Heart left ventricle (tissue), 16 donors: ENCODE measurements at regions of chr5 and their contacts with region 1.

Region 1: GRCh38 chr5:150486402-150487198 is 21.3 kb upstream of the NDST1 start:
- DNase-seq: peak; percentile 71 to 77 (median 75)
- ATAC-seq: peak; percentile 17 to 46 (median 22)
- H3K4me3 ChIP-seq: peak overlapping the region; percentile 70 to 100 (median 97)
- H3K27ac ChIP-seq: peak overlapping the region; percentile 94 to 100 (median 97)
- H3K4me1 ChIP-seq: peaks cover 30 to 60% (median 52%) of the 10 kb centered on the region in 12 donors
- H3K27me3 ChIP-seq: no peaks in the 10 kb centered on the region
- CTCF ChIP-seq: peak in 2 of 12 donors; percentile 27 to 29
- POLR2A ChIP-seq: no peak

Region 2: GRCh38 chr5:150449517-150450339 is 36.9 kb before region 1 on chr5 and contains the start of gene RPS14:
- intact Hi-C with region 1: loop called in 1 of 10 experiments (anchors 5 kb)
- DNase-seq: peak; percentile 93 to 96 (median 95)
- ATAC-seq: peak; percentile 96 to 98 (median 97)
- H3K4me3 ChIP-seq: peak within 1 kb of the TSS; percentile 75 to 90 (median 83)
- H3K27ac ChIP-seq: peak within 1 kb of the TSS; percentile 89 to 99 (median 96)
- H3K4me1 ChIP-seq: peaks cover 0 to 37% (median 16%) of the 10 kb centered on the region in 12 donors
- H3K27me3 ChIP-seq: no peaks in the 10 kb centered on the region
- CTCF ChIP-seq: peak; percentile 79 to 99 (median 94)
- POLR2A ChIP-seq: peak in 1 of 2 donors; percentile 84
- total RNA-seq, gene RPS14: 1,031 to 1,428 (median 1,294) TPM

Region 3: DNA sequence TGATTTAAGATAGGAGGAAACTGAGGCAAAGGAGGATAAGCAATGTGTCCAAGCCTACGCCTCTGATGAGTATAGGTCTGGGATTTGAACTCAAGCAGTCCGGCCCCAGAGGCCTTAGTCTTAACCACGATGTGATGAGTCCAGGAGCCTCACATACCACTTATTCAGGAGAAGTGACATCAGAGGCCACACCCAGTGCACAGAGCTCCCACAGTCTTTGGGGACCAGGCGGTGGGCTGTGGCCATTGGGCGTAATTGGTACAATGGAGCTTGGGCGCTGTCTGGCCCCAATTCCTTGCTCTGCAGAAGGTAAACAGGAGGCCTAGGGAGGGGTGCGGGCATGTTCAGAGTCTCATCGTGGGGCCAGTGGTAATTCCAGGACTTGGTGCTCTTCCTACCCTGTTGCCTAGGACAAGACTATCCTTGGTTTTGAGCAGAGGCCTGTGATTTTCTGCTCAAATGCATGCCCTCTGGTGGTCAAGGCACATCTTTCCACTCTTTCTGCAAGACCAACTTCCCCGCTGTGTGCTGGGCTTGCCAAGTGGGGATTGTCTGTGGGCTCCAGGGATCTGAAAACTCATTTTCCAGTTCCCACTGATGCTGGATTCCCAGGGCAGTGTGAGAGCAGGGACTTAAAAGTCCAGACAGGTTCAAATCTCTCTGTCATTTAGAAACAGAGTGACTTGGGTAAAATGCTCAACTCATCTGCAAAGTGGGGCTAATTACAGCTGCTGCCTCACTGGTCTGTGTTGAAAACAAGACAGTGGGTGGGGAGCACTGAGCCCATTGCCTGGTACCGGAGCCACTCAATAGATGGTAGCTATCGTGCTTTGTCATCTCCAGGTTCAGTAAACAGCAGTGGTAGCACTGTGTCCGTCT is 37.1 kb after region 1 on chr5:
- intact Hi-C with region 1: loop called in 9 of 10 experiments (anchors 2 to 5 kb)
- DNase-seq: peak in 4 of 5 donors; percentile 52 to 57 (median 54)
- ATAC-seq: peak; percentile 18 to 61 (median 46)
- H3K4me3 ChIP-seq: no peak overlapping the region
- H3K27ac ChIP-seq: peak overlapping the region; percentile 53 to 89 (median 72)
- H3K4me1 ChIP-seq: peaks cover 16 to 88% (median 69%) of the 10 kb centered on the region in 12 donors
- H3K27me3 ChIP-seq: no peaks in the 10 kb centered on the region
- CTCF ChIP-seq: peak; percentile 56 to 75 (median 67)
- POLR2A ChIP-seq: no peak

Region 4: GRCh38 chr5:150544611-150545219 is 58.1 kb after region 1 on chr5:
- intact Hi-C with region 1: loop called in 6 of 10 experiments (anchors 1 to 10 kb)
- DNase-seq: peak; percentile 78 to 88 (median 83)
- ATAC-seq: peak; percentile 74 to 83 (median 78)
- H3K4me3 ChIP-seq: no peak overlapping the region
- H3K27ac ChIP-seq: peak overlapping the region in 1 of 12 donors; percentile 10
- H3K4me1 ChIP-seq: peaks cover 0 to 40% (median 16%) of the 10 kb centered on the region in 12 donors
- H3K27me3 ChIP-seq: no peaks in the 10 kb centered on the region
- CTCF ChIP-seq: peak; percentile 81 to 95 (median 88)
- POLR2A ChIP-seq: no peak

Region 5: GRCh38 chr5:150559686-150560085 is 73.1 kb after region 1 on chr5:
- intact Hi-C with region 1: no loop called
- DNase-seq: no peak
- ATAC-seq: no peak
- H3K4me3 ChIP-seq: no peak overlapping the region
- H3K27ac ChIP-seq: no peak overlapping the region
- H3K4me1 ChIP-seq: peaks cover 0 to 20% (median 4%) of the 10 kb centered on the region in 12 donors
- H3K27me3 ChIP-seq: no peaks in the 10 kb centered on the region
- CTCF ChIP-seq: no peak
- POLR2A ChIP-seq: no peak